ENCODE measurements at regions of chr17 and their contacts with region 1.

Region 1: DNA sequence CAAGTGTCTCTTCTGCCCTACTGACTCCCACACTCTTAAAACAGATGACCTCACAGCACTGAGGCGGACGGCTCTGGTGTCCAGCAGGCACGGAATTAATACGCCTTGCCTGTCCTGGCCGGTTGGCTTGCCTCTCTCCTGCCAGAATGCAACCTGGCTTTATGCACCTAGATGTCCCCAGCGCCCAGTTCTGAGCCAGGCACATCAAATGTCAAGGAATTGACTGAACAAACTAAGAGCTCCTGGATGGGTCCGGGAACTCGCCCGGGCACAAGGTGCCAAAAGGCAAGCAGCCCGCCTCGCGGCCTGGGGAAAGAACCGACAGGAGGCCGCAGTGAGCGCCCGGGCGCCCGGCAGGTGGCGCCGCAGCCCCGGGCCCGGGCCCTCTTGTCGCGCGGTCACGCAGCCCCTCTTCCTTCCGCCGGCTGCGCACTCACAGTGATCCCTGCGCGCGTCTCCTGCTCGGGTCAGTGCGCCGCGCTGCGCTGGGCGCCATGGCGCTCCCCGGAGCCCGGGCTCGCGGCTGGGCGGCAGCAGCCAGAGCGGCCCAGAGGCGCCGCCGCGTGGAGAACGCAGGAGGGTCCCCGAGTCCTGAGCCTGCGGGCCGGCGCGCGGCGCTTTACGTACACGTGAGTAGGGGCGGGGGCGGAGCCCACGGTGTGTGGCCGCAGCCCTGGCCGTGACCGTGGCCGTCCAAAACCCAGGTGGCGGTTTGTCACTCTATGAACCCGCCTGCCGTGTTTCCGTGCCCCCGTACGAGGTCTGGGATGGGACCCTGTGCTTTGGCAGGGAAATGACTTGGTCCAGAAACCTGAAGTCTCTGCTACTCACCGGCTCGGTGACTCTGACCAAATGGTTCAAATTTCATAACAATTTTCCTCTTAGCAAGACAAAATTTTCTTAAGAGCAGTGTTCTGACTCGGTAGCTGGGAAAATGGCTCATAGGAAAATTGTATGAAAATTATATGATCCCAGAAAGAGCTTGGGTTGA is at the start of gene RSAD1:
- DNase-seq: peak; percentile 84
- ATAC-seq: peak; percentile 95
- H3K4me3 Mint-ChIP-seq: peak within 1 kb of the TSS; percentile 86
- H3K27ac Mint-ChIP-seq: peak within 1 kb of the TSS; percentile 90
- H3K4me1 Mint-ChIP-seq: peaks cover 19% of the 10 kb centered on the region
- H3K27me3 Mint-ChIP-seq: peaks cover 3% of the 10 kb centered on the region
- CTCF ChIP-seq: no peak
- total RNA-seq, gene RSAD1: 36.2 and 42.2 TPM in 2 replicates

Region 2: GRCh38 chr17:50345432-50346312 is 133.0 kb before region 1 on chr17 and contains the start of gene XYLT2:
- CTCF ChIA-PET with region 1: no interaction called
- POLR2A ChIA-PET with region 1: no interaction called
- intact Hi-C with region 1: loop called (anchors 1 kb)
- DNase-seq: peak; percentile 97
- ATAC-seq: peak; percentile 94
- H3K4me3 Mint-ChIP-seq: peak within 1 kb of the TSS; percentile 90
- H3K27ac Mint-ChIP-seq: peak within 1 kb of the TSS; percentile 89
- H3K4me1 Mint-ChIP-seq: peaks cover 24% of the 10 kb centered on the region
- H3K27me3 Mint-ChIP-seq: no peaks in the 10 kb centered on the region
- CTCF ChIP-seq: no peak
- total RNA-seq, gene XYLT2: 20.3 and 21.4 TPM in 2 replicates

Region 3: DNA sequence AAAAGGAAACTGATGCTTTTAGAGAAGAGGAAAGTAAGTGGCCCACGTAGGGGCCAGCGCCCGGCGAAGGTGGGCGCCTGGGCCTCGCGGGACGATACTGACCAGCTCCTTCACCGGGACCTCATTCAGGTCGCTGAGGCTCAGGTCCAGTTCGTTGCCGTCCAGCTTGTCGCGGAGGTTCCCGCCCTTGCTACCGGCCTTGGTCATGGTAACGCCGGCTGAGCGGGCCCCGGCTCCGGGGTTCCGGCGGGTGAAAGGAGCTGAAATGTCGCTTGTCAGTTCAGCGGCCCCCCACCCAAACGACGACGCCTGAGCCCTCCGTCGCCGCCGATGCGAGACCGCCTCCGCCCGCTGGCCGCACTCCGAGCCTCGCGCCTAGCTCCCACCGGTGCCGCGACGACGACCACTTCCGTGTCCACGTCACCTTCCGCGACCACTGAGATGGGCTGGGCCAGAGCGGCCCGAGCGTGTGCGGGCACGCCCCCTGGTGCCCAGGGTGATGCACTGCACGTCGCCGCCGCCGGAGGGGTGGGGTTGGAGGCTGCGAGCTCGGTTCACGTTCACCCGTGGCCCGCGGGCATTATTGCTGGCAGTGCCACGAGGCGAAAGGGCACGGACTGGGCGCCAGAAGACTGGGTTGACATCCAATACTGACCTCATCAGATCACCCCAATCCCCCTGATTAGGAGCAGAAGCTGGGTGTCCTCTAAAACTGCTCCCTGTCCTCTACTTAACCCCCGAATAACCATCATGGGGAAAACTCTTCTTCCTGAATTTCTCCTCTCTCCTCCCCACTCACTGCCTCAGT is 81.4 kb before region 1 on chr17 and contains the start of gene LRRC59:
- CTCF ChIA-PET with region 1: interaction called, 27 read pairs
- POLR2A ChIA-PET with region 1: interaction called, 20 read pairs
- intact Hi-C with region 1: loop called (anchors 1 kb)
- DNase-seq: peak; percentile 95
- ATAC-seq: peak; percentile 100
- H3K4me3 Mint-ChIP-seq: peak within 1 kb of the TSS; percentile 88
- H3K27ac Mint-ChIP-seq: peak within 1 kb of the TSS; percentile 76
- H3K4me1 Mint-ChIP-seq: peaks cover 23% of the 10 kb centered on the region
- H3K27me3 Mint-ChIP-seq: no peaks in the 10 kb centered on the region
- CTCF ChIP-seq: peak; percentile 76
- total RNA-seq, gene LRRC59: 41.8 and 42.0 TPM in 2 replicates

Region 4: DNA sequence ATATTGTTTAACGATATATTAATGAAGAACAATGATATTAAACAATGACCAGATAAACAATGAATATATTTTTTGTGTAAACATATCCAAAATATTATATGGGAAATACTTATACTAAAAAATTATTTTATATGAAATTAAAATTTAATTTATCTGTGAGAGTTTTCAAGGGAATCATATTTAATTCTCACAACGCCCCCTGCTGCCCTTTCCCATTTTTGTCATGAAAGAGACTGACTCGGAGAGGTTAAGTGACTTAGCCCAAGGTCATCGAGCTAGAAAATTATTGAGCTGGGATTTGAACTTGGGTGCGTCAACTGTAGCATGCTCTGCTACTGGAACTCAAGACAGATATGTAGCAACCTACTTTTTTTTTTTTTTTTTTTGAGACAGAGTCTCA is 22.4 kb after region 1 on chr17:
- CTCF ChIA-PET with region 1: interaction called, 11 read pairs
- POLR2A ChIA-PET with region 1: no interaction called
- intact Hi-C with region 1: loop called (anchors 1 kb)
- DNase-seq: no peak
- ATAC-seq: no peak
- H3K4me3 Mint-ChIP-seq: no peak overlapping the region
- H3K27ac Mint-ChIP-seq: no peak overlapping the region
- H3K4me1 Mint-ChIP-seq: no peaks in the 10 kb centered on the region
- H3K27me3 Mint-ChIP-seq: peaks cover 2% of the 10 kb centered on the region
- CTCF ChIP-seq: no peak

Region 5: DNA sequence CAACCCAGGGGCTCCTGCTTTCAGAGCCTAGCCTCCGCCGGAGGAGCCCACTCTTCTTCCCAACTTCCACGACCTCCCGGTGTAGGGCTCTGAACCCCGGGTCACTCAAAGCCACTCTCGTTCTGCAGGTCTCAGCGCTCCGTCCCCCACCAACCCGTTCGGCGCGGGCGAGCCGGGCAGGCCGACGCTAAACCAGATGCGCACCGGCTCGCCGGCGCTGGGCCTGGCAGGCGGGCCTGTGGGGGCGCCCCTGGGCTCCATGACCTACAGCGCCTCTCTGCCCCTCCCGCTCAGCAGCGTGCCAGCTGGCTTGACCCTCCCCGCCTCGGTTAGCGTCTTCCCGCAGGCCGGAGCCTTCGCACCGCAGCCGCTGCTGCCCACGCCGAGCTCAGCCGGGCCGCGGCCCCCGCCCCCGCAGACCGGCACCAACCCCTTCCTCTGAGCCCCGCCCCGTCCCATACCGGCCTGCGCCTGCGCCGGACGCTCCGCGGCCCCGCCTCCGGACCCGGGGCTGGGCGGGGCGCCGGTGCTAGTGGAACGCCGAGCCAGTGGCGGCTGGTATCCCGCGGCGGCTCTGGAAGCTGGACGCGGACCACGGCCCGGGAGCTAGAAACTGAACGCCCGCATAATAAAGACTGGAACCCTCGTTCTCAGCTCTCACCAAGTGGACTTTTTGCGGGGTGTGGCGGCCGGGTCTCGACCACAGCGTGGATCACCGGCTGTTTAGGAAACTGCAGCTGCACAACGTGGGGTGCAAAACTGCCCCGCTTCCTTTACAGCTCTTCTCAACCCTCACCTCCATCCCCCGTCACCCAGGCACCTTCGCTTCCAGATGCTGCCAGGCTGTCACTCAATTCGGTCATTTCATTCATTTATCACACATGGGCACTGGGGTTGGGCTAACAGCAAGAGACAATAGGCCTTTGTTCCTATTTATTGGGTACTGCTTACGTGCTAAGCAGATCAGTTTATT is 63.3 kb after region 1 on chr17:
- CTCF ChIA-PET with region 1: interaction called, 5 read pairs
- POLR2A ChIA-PET with region 1: no interaction called
- intact Hi-C with region 1: loop called (anchors 1 kb)
- DNase-seq: peak; percentile 92
- ATAC-seq: peak; percentile 86
- H3K4me3 Mint-ChIP-seq: peak overlapping the region; percentile 85
- H3K27ac Mint-ChIP-seq: peak overlapping the region; percentile 76
- H3K4me1 Mint-ChIP-seq: peaks cover 17% of the 10 kb centered on the region
- H3K27me3 Mint-ChIP-seq: peaks cover 7% of the 10 kb centered on the region
- CTCF ChIP-seq: no peak

Region 6: GRCh38 chr17:50626037-50626574 is 147.4 kb after region 1 on chr17:
- CTCF ChIA-PET with region 1: interaction called, 3 read pairs
- POLR2A ChIA-PET with region 1: interaction called, 4 read pairs
- intact Hi-C with region 1: loop called (anchors 1 kb)
- DNase-seq: peak; percentile 47
- ATAC-seq: peak; percentile 76
- H3K4me3 Mint-ChIP-seq: no peak overlapping the region
- H3K27ac Mint-ChIP-seq: no peak overlapping the region
- H3K4me1 Mint-ChIP-seq: no peaks in the 10 kb centered on the region
- H3K27me3 Mint-ChIP-seq: peaks cover 39% of the 10 kb centered on the region
- CTCF ChIP-seq: no peak